Activated CD8-positive, alpha-beta memory T cell treated with anti-CD3 and anti-CD28 coated beads, Interleukin-2, amount 10 ng/mL, durations not matched to agents 7 days and 5 days (primary cell): ENCODE measurements at regions of chr12 and their contacts with region 1.

Region 1: DNA sequence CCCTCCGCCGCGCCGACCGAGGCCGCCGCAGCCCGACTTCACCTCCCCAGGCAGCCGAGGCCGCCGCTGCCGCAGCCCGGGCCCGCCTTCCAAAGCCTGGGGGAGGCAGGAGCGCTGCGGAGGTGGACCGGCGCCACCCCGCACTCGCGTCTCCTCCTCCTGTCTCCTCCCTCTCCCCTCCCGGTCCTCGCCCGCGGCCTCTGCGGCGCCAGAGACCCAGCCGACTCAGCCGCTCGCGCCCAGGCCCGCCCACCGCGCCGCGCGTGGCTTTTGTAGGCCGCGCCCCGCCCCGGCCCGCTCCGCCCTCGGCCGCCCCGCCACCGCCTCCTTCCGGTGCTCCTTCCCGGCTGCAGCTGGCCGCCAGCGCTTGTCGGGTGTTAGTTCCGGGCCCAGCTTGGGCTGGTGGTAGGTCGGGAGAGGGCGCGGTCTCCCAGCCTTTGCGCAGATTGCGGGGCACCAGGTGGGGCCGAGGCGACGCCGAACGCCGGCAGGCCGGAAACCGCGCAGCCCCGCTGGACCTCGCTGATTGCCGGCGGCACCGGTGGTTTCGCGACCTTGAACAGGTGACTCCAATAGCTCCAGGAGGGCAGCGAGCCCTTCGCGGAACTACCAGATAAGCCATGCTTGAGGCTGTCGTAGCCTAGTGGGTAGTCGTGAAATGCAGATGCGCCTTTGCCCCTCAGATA is at the start of gene CAPRIN2:
- DNase-seq: peak; percentile 95
- ATAC-seq: peak; percentile 93
- H3K4me3 Mint-ChIP-seq: peak within 1 kb of the TSS; percentile 85
- H3K27ac Mint-ChIP-seq: peak within 1 kb of the TSS; percentile 77
- H3K4me1 Mint-ChIP-seq: peaks cover 33% of the 10 kb centered on the region
- H3K27me3 Mint-ChIP-seq: no peaks in the 10 kb centered on the region
- total RNA-seq, gene CAPRIN2: 10.0 to 16.2 TPM

Region 2: GRCh38 chr12:30725739-30726138 is 29.1 kb before region 1 on chr12:
- CTCF ChIA-PET with region 1: interaction called, 12 read pairs
- DNase-seq: no peak
- ATAC-seq: no peak
- H3K4me3 Mint-ChIP-seq: no peak overlapping the region
- H3K27ac Mint-ChIP-seq: no peak overlapping the region
- H3K4me1 Mint-ChIP-seq: no peaks in the 10 kb centered on the region
- H3K27me3 Mint-ChIP-seq: no peaks in the 10 kb centered on the region

Region 3: GRCh38 chr12:30744321-30744720 is 10.5 kb before region 1 on chr12:
- CTCF ChIA-PET with region 1: interaction called, 11 read pairs
- DNase-seq: no peak
- ATAC-seq: no peak
- H3K4me3 Mint-ChIP-seq: no peak overlapping the region
- H3K27ac Mint-ChIP-seq: no peak overlapping the region
- H3K4me1 Mint-ChIP-seq: peaks cover 4% of the 10 kb centered on the region
- H3K27me3 Mint-ChIP-seq: no peaks in the 10 kb centered on the region

Region 4: DNA sequence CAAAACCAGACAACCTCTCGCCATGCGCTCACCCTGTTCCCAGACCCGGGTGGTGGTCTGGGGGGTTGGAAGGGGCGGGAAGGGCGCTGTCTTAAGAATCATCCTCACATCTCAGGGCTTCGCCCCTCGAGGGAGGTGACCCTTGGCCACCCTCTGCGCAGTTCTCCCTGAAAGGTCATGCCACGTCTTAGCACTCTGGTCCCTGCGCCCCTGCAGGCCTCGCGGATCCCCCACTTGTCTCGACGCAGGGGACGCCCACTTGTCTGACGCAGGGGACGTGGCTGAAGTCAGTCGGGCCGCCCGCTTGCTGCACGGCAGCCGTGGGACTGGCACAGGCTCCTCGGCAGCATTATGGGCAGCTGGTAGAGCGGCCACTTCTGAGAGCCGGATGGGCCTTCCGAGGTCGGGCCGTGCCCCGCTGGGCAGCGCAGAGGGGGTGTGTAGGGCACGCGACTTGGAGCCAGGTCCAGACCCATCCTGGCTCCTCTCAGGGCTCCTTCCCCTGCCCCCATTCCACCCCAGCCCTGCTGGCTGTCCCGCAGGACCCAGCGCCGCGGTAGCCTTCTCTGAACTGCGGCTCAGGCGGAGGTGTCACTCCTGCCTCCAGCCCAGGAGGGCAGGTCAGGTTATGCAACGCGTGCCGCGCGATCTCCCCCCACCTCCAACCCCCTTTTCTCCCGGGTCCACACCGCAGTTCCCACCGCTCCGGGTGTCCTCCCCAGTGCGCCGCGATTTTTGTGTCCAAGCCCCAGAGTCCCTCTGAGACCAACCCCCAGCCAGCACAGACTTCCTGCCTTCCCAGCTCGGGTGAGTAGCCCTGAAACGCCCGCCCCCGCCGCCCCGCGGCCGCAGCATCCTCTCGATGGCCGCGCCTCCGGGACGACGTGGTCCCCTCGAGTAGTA is 40.8 kb after region 1 on chr12:
- CTCF ChIA-PET with region 1: interaction called, 22 read pairs
- DNase-seq: peak; percentile 87
- ATAC-seq: peak; percentile 93
- H3K4me3 Mint-ChIP-seq: peak overlapping the region; percentile 81
- H3K27ac Mint-ChIP-seq: peak overlapping the region; percentile 79
- H3K4me1 Mint-ChIP-seq: peaks cover 23% of the 10 kb centered on the region
- H3K27me3 Mint-ChIP-seq: peaks cover 44% of the 10 kb centered on the region

Region 5: DNA sequence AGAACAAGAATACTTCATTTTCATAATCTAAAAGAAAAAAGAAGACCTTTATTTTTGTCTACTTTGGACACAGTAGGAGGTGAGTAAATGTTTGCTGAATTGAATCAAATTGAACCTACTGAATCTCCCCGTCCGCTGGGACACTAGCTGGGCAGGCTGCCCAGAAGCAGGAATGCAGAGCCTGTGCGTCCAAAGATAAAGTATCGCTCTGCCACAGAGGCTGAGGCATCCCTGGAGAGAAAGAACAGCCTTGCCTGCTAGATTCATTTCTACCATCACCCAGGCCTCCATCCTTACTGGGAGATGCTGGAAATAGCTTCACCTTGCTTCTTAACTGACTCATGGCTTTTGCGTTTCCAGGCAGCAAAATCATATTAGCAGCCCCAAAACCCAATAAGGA is 107.6 kb after region 1 on chr12:
- CTCF ChIA-PET with region 1: no interaction called
- DNase-seq: no peak
- ATAC-seq: no peak
- H3K4me3 Mint-ChIP-seq: no peak overlapping the region
- H3K27ac Mint-ChIP-seq: no peak overlapping the region
- H3K4me1 Mint-ChIP-seq: no peaks in the 10 kb centered on the region
- H3K27me3 Mint-ChIP-seq: peaks cover 31% of the 10 kb centered on the region